ENCODE measurements at regions of chr11 and their contacts with region 1.

Region 1: GRCh38 chr11:122853971-122854446 is 15.7 kb downstream of the CRTAM start:
- DNase-seq: peak in 1 of 2 donors; percentile 79
- ATAC-seq: peak in 5 of 8 donors; percentile 16 to 75 (median 46)
- H3K4me3 ChIP-seq: no peak overlapping the region
- H3K27ac ChIP-seq: no peak overlapping the region
- H3K4me1 ChIP-seq: peaks cover 0 to 33% (median 0%) of the 10 kb centered on the region in 9 donors
- H3K27me3 ChIP-seq: peaks cover 0 to 22% (median 4%) of the 10 kb centered on the region in 7 donors
- CTCF ChIP-seq: peak; percentile 71 to 83 (median 82)

Region 2: GRCh38 chr11:122578168-122578825 is 275.7 kb before region 1 on chr11:
- intact Hi-C with region 1: loop called in 5 of 10 experiments (anchors 1 to 5 kb)
- DNase-seq: no peak
- ATAC-seq: no peak
- H3K4me3 ChIP-seq: no peak overlapping the region
- H3K27ac ChIP-seq: no peak overlapping the region
- H3K4me1 ChIP-seq: peaks cover 0 to 11% (median 0%) of the 10 kb centered on the region in 9 donors
- H3K27me3 ChIP-seq: no peaks in the 10 kb centered on the region
- CTCF ChIP-seq: no peak

Region 3: GRCh38 chr11:122584670-122585069 is 269.3 kb before region 1 on chr11:
- intact Hi-C with region 1: loop called in 5 of 10 experiments (anchors 1 to 5 kb)
- DNase-seq: no peak
- ATAC-seq: no peak
- H3K4me3 ChIP-seq: no peak overlapping the region
- H3K27ac ChIP-seq: no peak overlapping the region
- H3K4me1 ChIP-seq: peaks cover 0 to 11% (median 0%) of the 10 kb centered on the region in 9 donors
- H3K27me3 ChIP-seq: peaks cover 0 to 9% (median 0%) of the 10 kb centered on the region in 7 donors
- CTCF ChIP-seq: no peak

Region 4: DNA sequence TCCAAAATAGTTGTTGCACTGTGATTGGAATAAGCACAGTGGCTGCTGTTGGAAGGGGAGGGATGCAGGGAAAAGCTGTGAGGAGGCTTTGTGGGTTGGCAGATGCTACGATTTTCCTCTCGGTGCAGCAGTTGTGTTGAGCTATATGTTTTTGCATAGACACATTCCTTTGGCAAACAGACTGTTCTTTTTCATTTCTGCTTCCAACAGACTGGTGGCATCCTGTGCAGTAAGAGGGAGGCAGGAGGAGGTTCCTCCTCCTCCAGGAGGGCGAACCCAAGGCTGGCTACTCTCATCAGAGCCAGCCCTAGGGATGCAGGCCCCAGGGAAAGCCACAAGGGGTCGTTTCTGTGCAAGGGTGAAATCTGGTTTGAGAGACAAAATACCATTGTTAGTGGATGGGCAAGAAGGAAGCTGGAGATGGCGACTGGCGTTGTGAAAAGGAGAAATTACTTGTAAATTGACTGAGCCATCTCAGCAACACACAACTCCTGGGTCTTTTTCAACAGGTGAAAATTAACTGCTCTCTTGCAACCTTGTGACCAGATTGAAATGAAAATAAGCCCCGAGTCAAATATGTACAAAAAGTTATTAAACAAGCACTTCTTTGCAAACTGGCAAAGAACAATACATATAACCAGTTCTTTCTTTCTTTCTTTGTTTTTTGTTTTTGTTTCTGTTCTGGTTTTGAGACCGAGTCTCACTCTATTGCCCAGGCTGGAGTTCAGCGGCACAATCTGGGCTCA is 225.0 kb before region 1 on chr11:
- intact Hi-C with region 1: loop called in 9 of 10 experiments (anchors 2 to 10 kb)
- DNase-seq: peak; percentile 48 to 57
- ATAC-seq: peak in 7 of 8 donors; percentile 58 to 79 (median 67)
- H3K4me3 ChIP-seq: no peak overlapping the region
- H3K27ac ChIP-seq: no peak overlapping the region
- H3K4me1 ChIP-seq: peaks cover 0 to 7% (median 0%) of the 10 kb centered on the region in 9 donors
- H3K27me3 ChIP-seq: peaks cover 0 to 40% (median 20%) of the 10 kb centered on the region in 7 donors
- CTCF ChIP-seq: peak; percentile 44 to 79 (median 74)

Region 5: GRCh38 chr11:122796128-122796717 is 57.8 kb before region 1 on chr11:
- intact Hi-C with region 1: loop called (anchors 1 to 10 kb)
- DNase-seq: peak; percentile 32 to 44
- ATAC-seq: peak in 4 of 8 donors; percentile 57 to 73 (median 64)
- H3K4me3 ChIP-seq: no peak overlapping the region
- H3K27ac ChIP-seq: no peak overlapping the region
- H3K4me1 ChIP-seq: peaks cover 0 to 9% (median 0%) of the 10 kb centered on the region in 9 donors
- H3K27me3 ChIP-seq: no peaks in the 10 kb centered on the region
- CTCF ChIP-seq: peak; percentile 61 to 90 (median 78)

Region 6: DNA sequence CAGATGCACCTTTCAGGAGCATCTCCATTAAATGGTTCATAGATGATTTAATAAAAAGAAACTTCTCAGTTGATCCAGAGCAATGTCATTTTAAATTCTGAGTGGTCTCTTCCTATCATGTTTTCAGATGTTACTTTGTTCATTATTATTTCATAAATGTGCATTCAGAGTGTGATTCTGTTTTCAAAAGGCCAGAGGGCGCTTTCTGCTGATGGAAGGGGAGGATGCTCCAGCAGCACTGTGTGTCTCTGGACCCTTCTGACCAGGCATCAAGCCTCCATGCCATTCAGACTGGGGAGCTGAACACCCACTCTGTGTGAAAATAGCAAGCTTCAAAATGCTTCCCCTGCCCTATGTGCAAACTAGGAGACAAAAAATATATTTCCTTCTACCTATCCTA is 39.6 kb before region 1 on chr11:
- intact Hi-C with region 1: loop called in 1 of 10 experiments (anchors 5 kb)
- DNase-seq: no peak
- ATAC-seq: no peak
- H3K4me3 ChIP-seq: no peak overlapping the region
- H3K27ac ChIP-seq: no peak overlapping the region
- H3K4me1 ChIP-seq: peaks cover 0 to 21% (median 10%) of the 10 kb centered on the region in 9 donors
- H3K27me3 ChIP-seq: no peaks in the 10 kb centered on the region
- CTCF ChIP-seq: peak in 2 of 9 donors; percentile 20 to 21

Region 7: DNA sequence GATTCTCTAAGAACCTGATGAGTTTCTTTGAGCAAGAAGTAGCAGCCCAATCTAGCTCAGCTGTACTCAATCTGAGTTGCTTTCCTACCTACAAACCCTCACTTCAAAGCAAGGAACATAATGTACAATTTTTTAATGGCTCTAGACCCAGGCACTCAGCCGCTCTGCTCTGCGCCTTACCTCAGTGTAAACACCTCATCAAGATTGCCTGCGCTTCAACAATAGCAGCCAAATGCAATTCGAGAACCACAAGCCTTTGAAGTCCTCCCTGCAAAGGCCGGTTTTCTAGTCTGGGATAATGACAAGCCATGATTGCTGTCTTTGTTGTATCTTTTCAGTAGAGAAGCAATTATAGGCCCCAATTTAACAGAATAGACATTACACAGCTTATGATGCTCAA is 66.6 kb after region 1 on chr11:
- intact Hi-C with region 1: no loop called
- DNase-seq: no peak
- ATAC-seq: no peak
- H3K4me3 ChIP-seq: no peak overlapping the region
- H3K27ac ChIP-seq: no peak overlapping the region
- H3K4me1 ChIP-seq: no peaks in the 10 kb centered on the region
- H3K27me3 ChIP-seq: no peaks in the 10 kb centered on the region
- CTCF ChIP-seq: no peak

Measured in heart right ventricle (tissue), 16 donors.